ENCODE measurements at regions of chr18 and their contacts with region 1.

Region 1: DNA sequence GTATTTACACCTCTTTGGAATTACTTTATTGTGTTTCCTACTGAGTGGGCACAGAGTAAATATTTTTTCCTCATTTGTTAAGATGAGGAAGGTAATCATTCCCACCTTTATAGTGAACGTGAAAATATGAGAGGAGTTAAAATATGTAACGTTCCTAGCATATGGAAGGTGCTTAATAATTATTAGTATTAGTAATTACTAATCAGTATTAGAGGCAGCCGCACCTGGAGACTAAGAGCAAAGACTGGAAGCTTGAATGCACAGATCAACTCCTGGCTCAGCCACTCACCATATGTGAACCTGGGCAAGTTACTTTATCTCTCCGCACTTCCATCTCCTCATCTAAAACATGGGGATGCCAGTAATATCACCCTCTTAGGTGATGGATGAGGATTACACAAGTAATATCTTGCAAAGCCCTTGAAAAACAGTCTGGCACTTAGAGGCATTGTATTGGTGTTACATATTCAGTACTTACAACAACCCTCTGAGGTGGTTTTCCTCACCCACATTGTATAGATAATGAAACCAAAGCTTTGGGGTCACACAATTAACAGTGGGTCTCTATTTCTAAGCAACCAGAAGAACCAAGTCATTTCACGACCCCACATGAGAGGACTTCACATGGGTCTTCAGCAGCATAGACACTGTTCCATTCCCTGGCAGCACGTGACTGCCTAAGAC is 100.3 kb upstream of the KCTD1 start:
- DNase-seq: no peak
- H3K4me3 Mint-ChIP-seq: no peak overlapping the region
- H3K27ac Mint-ChIP-seq: no peak overlapping the region
- H3K4me1 Mint-ChIP-seq: no peaks in the 10 kb centered on the region
- H3K27me3 Mint-ChIP-seq: peaks cover 20% of the 10 kb centered on the region

Region 2: DNA sequence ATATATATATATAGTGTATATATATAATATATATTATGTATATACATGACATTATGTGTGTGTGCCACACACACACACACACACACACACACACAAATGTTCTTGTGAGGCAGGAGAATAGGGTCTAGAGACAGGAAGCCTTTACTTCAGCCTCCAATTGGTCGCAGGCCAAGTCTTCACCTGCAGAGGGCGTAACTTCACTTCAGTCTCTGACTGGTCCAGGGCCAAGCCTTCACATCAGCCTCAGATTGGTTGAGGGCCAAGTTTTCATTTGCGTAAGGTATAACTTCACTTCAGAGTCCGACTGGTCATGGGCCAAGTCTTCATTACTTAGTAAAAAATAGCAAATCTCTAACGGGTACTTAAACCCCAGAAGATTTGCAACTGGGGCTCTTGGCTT is 545.1 kb before region 1 on chr18:
- CTCF ChIA-PET with region 1: no interaction called
- intact Hi-C with region 1: loop called (anchors 5 kb)
- DNase-seq: peak; percentile 79
- H3K4me3 Mint-ChIP-seq: no peak overlapping the region
- H3K27ac Mint-ChIP-seq: no peak overlapping the region
- H3K4me1 Mint-ChIP-seq: no peaks in the 10 kb centered on the region
- H3K27me3 Mint-ChIP-seq: no peaks in the 10 kb centered on the region

Region 3: DNA sequence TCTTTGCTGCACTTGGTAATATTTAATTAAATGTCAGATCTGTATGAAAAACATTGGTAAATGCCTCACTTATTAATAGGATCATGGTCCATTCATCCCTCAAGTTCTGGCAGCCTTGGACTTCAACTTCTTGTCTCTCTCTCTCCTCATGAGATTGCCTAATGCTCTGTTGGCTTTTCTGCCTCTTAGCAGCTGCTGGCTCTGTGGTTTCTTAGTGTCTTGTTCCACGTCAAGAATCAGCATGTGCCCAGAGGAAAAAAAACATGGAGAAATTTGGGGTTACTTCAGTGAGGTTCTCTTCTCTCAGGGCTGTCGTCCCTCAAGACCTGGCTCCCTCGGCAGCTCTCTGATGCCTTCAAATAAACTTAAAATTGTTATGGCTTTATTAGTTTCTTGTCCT is 347.0 kb before region 1 on chr18:
- CTCF ChIA-PET with region 1: no interaction called
- intact Hi-C with region 1: no loop called
- DNase-seq: no peak
- H3K4me3 Mint-ChIP-seq: no peak overlapping the region
- H3K27ac Mint-ChIP-seq: no peak overlapping the region
- H3K4me1 Mint-ChIP-seq: no peaks in the 10 kb centered on the region
- H3K27me3 Mint-ChIP-seq: no peaks in the 10 kb centered on the region

Region 4: GRCh38 chr18:26383454-26384270 is 265.0 kb before region 1 on chr18:
- CTCF ChIA-PET with region 1: interaction called, 3 read pairs
- intact Hi-C with region 1: loop called (anchors 1 kb)
- DNase-seq: no peak
- H3K4me3 Mint-ChIP-seq: no peak overlapping the region
- H3K27ac Mint-ChIP-seq: no peak overlapping the region
- H3K4me1 Mint-ChIP-seq: no peaks in the 10 kb centered on the region
- H3K27me3 Mint-ChIP-seq: no peaks in the 10 kb centered on the region

Region 5: GRCh38 chr18:26548429-26549262 is 100.0 kb before region 1 on chr18 and contains the start of gene KCTD1:
- CTCF ChIA-PET with region 1: no interaction called
- intact Hi-C with region 1: loop called (anchors 2 kb)
- DNase-seq: peak; percentile 76
- H3K4me3 Mint-ChIP-seq: peak within 1 kb of the TSS; percentile 79
- H3K27ac Mint-ChIP-seq: no peak within 1 kb of the TSS
- H3K4me1 Mint-ChIP-seq: peaks cover 30% of the 10 kb centered on the region
- H3K27me3 Mint-ChIP-seq: peaks cover 36% of the 10 kb centered on the region
- total RNA-seq, gene KCTD1: 1.7 to 1.9 TPM